ENCODE measurements at regions of chr2 and their contacts with region 1.

Region 1: GRCh38 chr2:182186132-182186735 is 200.6 kb downstream of the PPP1R1C start:
- DNase-seq: peak in 2 of 5 donors; percentile 51 to 62
- H3K4me3 ChIP-seq: no peak overlapping the region
- H3K27ac ChIP-seq: no peak overlapping the region
- H3K4me1 ChIP-seq: no peaks in the 10 kb centered on the region
- H3K27me3 ChIP-seq: no peaks in the 10 kb centered on the region
- CTCF ChIP-seq: peak; percentile 73

Region 2: GRCh38 chr2:182593394-182593975 is 407.3 kb after region 1 on chr2:
- intact Hi-C with region 1: no loop called
- DNase-seq: peak in 1 of 5 donors; percentile 10
- H3K4me3 ChIP-seq: no peak overlapping the region
- H3K27ac ChIP-seq: no peak overlapping the region
- H3K4me1 ChIP-seq: no peaks in the 10 kb centered on the region
- H3K27me3 ChIP-seq: no peaks in the 10 kb centered on the region
- CTCF ChIP-seq: no peak

Region 3: DNA sequence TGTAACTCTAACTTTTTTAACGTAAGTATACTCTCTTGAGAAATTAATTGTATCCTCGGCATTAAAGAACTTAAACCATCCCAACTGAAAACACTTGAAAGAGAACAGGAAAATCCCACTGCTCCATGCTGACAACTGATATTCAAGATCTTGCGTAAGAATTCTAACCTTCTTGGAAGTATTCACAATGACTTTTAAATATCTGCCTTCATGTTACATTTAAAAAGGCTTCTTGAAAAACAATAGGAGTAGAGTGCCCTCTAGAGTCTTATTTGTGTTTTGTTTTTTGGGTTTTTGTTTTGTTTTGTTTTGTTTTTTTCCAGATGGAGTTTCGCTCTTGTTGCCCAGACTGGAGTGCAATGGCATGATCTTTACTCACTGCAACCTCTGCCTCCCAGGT is 464.5 kb after region 1 on chr2:
- intact Hi-C with region 1: loop called (anchors 5 kb)
- DNase-seq: peak in 2 of 5 donors; percentile 62 to 75
- H3K4me3 ChIP-seq: no peak overlapping the region
- H3K27ac ChIP-seq: no peak overlapping the region
- H3K4me1 ChIP-seq: no peaks in the 10 kb centered on the region
- H3K27me3 ChIP-seq: no peaks in the 10 kb centered on the region
- CTCF ChIP-seq: peak; percentile 35